ENCODE measurements at regions of chr14 and their contacts with region 1.

Region 1: GRCh38 chr14:49461529-49462401 is 124.4 kb downstream of the RPS29 start:
- DNase-seq: peak; percentile 81
- H3K4me3 Mint-ChIP-seq: no peak overlapping the region
- H3K27ac Mint-ChIP-seq: no peak overlapping the region
- H3K4me1 Mint-ChIP-seq: no peaks in the 10 kb centered on the region
- H3K27me3 Mint-ChIP-seq: no peaks in the 10 kb centered on the region

Region 2: DNA sequence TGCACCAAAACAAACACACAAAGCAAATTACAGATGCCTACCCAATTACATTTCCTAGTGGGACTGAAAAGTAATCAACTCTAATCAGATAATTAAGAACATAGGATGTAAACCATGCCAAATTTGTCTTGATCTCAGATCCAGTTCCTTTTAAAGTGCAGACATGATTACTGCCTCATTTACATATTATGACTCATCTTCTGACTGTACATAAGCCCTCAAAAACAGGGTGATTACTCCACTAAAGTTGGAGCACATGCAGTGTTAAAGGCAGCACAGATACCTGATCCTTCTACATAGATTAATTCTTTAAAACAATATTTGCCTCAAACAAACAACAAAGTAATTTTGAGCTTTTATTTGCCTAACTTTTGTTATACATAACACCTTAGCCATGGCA is 212.7 kb before region 1 on chr14:
- CTCF ChIA-PET with region 1: no interaction called
- intact Hi-C with region 1: no loop called
- DNase-seq: no peak
- H3K4me3 Mint-ChIP-seq: no peak overlapping the region
- H3K27ac Mint-ChIP-seq: no peak overlapping the region
- H3K4me1 Mint-ChIP-seq: no peaks in the 10 kb centered on the region
- H3K27me3 Mint-ChIP-seq: peaks cover 3% of the 10 kb centered on the region

Region 3: DNA sequence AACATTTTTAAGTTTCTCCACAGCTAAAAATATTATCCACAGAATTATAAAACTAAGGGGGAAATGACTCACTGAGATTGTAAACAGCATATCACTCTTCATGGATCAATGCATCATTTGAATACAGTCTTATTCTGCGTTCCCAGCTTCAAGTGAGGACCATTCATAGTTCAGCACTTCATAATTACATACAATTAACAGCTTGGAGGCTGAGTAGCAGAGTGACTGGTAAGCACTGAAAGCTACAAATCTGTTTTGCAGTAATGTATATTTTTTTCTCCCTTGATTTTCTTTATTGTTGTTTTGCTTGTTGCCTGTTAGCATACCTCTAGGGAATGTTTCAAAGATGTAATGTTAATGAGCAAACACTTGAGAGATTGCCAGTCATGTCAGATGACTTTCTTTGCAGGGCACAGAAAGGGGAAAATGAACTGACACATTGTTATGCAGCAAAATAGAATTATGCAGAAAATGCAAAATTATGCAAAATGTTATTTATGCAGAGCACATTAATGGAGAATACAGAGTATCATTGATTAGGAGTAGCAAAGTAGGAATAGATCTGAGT is 14.1 kb before region 1 on chr14:
- CTCF ChIA-PET with region 1: interaction called, 20 read pairs
- intact Hi-C with region 1: no loop called
- DNase-seq: no peak
- H3K4me3 Mint-ChIP-seq: no peak overlapping the region
- H3K27ac Mint-ChIP-seq: no peak overlapping the region
- H3K4me1 Mint-ChIP-seq: no peaks in the 10 kb centered on the region
- H3K27me3 Mint-ChIP-seq: peaks cover 5% of the 10 kb centered on the region

Region 4: DNA sequence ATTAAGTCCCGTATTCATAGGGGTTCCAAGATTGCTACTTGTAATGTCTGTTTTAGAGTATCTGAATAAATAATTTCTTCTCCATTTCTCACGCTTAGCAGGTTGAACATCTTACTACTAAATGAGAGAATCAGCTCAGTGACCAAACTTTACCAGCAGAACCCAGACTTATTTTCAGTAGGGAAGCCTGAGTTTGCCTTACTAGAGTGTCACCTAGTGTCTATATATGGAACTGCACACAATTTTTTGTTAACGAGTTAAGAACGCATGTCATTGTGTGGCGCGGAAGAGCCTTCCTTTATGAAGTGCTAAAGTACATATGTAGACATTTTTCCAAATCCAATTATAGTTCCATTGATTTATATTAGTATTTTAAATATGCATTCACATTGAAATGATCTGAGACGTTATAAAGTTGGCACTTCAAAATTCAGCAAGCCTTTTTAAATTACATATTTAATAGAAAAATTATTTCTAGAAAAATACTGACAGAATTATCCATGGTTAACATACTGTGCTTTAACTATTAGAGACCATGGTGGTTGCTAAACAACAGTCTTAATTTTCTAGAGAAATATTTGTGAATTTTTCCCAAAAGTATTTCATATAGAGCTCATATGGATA is 36.1 kb after region 1 on chr14:
- CTCF ChIA-PET with region 1: interaction called, 144 read pairs
- intact Hi-C with region 1: loop called (anchors 1 kb)
- DNase-seq: peak; percentile 21
- H3K4me3 Mint-ChIP-seq: no peak overlapping the region
- H3K27ac Mint-ChIP-seq: no peak overlapping the region
- H3K4me1 Mint-ChIP-seq: no peaks in the 10 kb centered on the region
- H3K27me3 Mint-ChIP-seq: peaks cover 2% of the 10 kb centered on the region

Region 5: GRCh38 chr14:49550286-49551184 is 88.8 kb after region 1 on chr14:
- CTCF ChIA-PET with region 1: interaction called, 11 read pairs
- intact Hi-C with region 1: loop called (anchors 1 kb)
- DNase-seq: no peak
- H3K4me3 Mint-ChIP-seq: no peak overlapping the region
- H3K27ac Mint-ChIP-seq: no peak overlapping the region
- H3K4me1 Mint-ChIP-seq: no peaks in the 10 kb centered on the region
- H3K27me3 Mint-ChIP-seq: no peaks in the 10 kb centered on the region

Region 6: DNA sequence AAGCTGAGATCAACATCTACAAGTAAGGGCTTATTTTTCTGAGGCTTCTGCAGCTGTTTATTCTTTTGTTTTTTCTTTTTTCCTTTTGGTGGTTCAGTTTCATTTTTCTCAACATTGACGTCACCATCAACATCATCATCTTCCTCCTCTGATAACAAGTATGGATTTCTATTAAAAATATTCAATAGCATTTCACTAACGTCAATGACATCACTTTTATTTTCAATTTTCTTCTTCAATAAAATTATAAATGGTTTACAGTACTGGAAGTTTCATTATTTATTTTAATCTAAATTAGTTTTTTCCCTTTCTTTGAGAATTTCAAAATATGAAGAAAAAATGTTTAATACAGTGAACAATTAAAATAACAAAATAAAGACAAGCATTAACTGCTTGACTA is 366.9 kb after region 1 on chr14:
- CTCF ChIA-PET with region 1: no interaction called
- intact Hi-C with region 1: loop called (anchors 1 kb)
- DNase-seq: no peak
- H3K4me3 Mint-ChIP-seq: no peak overlapping the region
- H3K27ac Mint-ChIP-seq: no peak overlapping the region
- H3K4me1 Mint-ChIP-seq: no peaks in the 10 kb centered on the region
- H3K27me3 Mint-ChIP-seq: no peaks in the 10 kb centered on the region

Region 7: GRCh38 chr14:50109342-50109741 is 647.6 kb after region 1 on chr14:
- CTCF ChIA-PET with region 1: no interaction called
- intact Hi-C with region 1: loop called (anchors 1 kb)
- DNase-seq: no peak
- H3K4me3 Mint-ChIP-seq: no peak overlapping the region
- H3K27ac Mint-ChIP-seq: peak overlapping the region; percentile 59
- H3K4me1 Mint-ChIP-seq: peaks cover 43% of the 10 kb centered on the region
- H3K27me3 Mint-ChIP-seq: no peaks in the 10 kb centered on the region